ENCODE measurements at regions of chr3 and their contacts with region 1.

Region 1: DNA sequence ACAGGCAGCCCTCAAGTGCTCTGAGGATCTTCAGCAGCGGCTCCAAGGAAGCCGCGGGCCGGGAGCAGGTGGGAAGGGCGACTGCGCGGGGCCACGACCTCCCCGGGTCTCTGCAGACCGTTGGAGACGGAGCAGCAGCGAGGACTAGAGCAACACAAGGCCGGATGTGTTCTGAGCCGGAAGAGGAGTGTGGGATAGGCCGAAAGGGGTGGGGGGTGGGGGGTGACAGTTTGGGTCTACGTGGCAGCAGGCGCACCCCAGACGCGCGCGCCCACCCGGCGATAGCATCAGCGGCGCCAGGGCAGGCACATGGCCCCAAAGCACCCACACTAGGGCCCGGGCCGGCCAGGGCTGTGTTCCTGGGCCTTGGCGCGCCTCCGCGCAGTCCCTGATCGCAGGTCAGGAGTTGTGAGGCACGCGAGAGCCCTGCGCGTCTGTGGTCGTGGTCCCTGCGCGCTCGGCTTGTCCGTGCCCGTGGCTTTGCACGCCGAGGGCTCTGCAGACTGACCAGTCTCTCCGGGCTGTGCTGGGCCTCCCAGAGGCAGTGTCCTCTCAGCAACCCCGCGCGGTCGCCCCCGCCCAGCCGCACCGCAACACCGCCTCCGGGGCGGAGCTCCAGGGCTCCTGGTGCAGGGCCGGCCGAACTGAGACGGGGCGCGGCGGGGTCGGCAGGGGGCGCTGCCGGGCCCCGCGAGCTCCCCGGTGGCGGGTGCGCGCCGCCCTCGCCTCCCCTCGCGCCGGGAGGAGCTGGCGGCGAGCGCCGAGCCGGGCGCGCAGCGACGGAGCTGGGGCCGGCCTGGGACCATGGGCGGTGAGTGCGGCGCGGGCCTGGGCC is at the start of gene PXYLP1:
- DNase-seq: peak; percentile 91 to 96
- H3K4me3 ChIP-seq: peak within 1 kb of the TSS; percentile 80
- H3K4me3 Mint-ChIP-seq: peak within 1 kb of the TSS; percentile 84
- H3K27ac Mint-ChIP-seq: peak within 1 kb of the TSS; percentile 15
- H3K4me1 ChIP-seq: peaks cover 38% of the 10 kb centered on the region
- H3K4me1 Mint-ChIP-seq: peaks cover 44% of the 10 kb centered on the region
- H3K27me3 ChIP-seq: no peaks in the 10 kb centered on the region
- H3K27me3 Mint-ChIP-seq: no peaks in the 10 kb centered on the region
- CTCF ChIP-seq: peak; percentile 26 to 56
- total RNA-seq, gene PXYLP1: 22.8 and 24.6 TPM in 2 replicates

Region 2: DNA sequence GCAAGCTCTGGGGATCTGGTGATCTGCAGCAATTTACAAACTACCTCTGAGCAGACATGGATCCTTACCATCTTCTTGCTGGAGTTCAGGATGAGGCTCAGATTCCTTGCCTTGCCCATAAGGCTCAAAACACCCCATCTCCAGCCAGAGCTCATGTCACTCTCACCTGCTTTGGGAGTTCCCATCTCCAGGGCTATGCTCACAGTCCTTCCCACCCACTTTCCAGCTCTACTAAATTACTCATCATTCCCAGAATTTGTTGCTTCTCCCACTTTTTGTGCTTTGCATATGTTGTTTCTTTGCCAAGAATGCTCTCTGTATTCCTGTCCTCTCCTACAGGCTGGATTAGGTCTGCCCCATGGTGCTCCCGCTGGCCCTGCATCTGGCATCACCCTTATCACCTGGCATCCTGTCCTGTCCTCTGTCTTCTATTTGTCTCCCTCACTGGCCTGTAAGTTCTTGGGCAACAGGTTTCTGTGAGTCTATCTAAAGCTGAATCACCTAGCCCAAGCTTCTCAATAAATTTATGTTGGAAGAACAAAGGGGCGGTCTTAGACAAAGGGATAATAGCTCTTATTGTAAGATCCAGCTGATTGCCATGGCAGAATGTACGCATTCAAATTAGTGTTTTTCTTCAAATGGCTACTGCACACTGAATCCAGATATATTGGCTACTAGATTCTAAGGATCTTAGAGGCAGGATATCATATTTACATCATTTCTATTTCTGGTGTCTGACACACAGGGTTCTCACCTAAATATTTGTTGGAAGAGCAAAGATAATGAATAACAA is 1117.1 kb before region 1 on chr3:
- CTCF ChIA-PET with region 1: no interaction called
- POLR2A ChIA-PET with region 1: interaction called, 10 read pairs
- intact Hi-C with region 1: no loop called
- DNase-seq: no peak
- H3K4me3 ChIP-seq: no peak overlapping the region
- H3K4me3 Mint-ChIP-seq: no peak overlapping the region
- H3K27ac Mint-ChIP-seq: no peak overlapping the region
- H3K4me1 ChIP-seq: peaks cover 8% of the 10 kb centered on the region
- H3K4me1 Mint-ChIP-seq: no peaks in the 10 kb centered on the region
- H3K27me3 ChIP-seq: no peaks in the 10 kb centered on the region
- H3K27me3 Mint-ChIP-seq: peaks cover 9% of the 10 kb centered on the region
- CTCF ChIP-seq: no peak

Region 3: GRCh38 chr3:141279077-141279967 is 48.0 kb after region 1 on chr3:
- CTCF ChIA-PET with region 1: interaction called, 11 read pairs
- POLR2A ChIA-PET with region 1: interaction called, 3 read pairs
- intact Hi-C with region 1: loop called (anchors 1 kb)
- DNase-seq: peak in 1 of 2 experiments; percentile 39
- H3K4me3 ChIP-seq: no peak overlapping the region
- H3K4me3 Mint-ChIP-seq: no peak overlapping the region
- H3K27ac Mint-ChIP-seq: no peak overlapping the region
- H3K4me1 ChIP-seq: peaks cover 13% of the 10 kb centered on the region
- H3K4me1 Mint-ChIP-seq: peaks cover 6% of the 10 kb centered on the region
- H3K27me3 ChIP-seq: no peaks in the 10 kb centered on the region
- H3K27me3 Mint-ChIP-seq: no peaks in the 10 kb centered on the region
- CTCF ChIP-seq: peak; percentile 51 to 64

Region 4: DNA sequence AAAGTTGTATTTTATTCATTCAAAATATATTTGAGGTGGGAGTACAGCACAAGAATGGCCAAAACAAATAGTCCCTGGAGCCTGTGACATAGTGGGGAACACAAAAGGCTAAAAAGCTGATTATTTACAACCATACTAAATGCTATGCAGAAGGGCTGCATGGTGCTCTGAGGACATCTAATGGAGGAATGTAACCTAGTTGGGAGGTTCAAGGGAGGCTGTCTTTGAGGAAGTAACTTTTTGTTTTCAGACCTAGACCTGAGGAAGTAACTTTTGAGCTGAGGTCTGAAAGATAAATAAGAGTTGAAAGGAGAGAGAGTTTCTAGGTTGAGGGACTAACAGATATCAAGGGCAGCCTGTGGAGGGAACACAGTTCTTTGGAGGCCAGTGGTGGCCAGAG is 220.7 kb after region 1 on chr3:
- CTCF ChIA-PET with region 1: interaction called, 6 read pairs
- POLR2A ChIA-PET with region 1: no interaction called
- intact Hi-C with region 1: loop called (anchors 5 kb)
- DNase-seq: peak; percentile 51 to 61
- H3K4me3 ChIP-seq: no peak overlapping the region
- H3K4me3 Mint-ChIP-seq: no peak overlapping the region
- H3K27ac Mint-ChIP-seq: no peak overlapping the region
- H3K4me1 ChIP-seq: peaks cover 44% of the 10 kb centered on the region
- H3K4me1 Mint-ChIP-seq: peaks cover 25% of the 10 kb centered on the region
- H3K27me3 ChIP-seq: no peaks in the 10 kb centered on the region
- H3K27me3 Mint-ChIP-seq: no peaks in the 10 kb centered on the region
- CTCF ChIP-seq: peak; percentile 46 to 64

Measured in Caco-2 (cell line).